Activated naive CD4-positive, alpha-beta T cell treated with anti-CD3 and anti-CD28 coated beads for 36 hours (primary cell): ENCODE measurements at regions of chr15 and their contacts with region 1.

Region 1: DNA sequence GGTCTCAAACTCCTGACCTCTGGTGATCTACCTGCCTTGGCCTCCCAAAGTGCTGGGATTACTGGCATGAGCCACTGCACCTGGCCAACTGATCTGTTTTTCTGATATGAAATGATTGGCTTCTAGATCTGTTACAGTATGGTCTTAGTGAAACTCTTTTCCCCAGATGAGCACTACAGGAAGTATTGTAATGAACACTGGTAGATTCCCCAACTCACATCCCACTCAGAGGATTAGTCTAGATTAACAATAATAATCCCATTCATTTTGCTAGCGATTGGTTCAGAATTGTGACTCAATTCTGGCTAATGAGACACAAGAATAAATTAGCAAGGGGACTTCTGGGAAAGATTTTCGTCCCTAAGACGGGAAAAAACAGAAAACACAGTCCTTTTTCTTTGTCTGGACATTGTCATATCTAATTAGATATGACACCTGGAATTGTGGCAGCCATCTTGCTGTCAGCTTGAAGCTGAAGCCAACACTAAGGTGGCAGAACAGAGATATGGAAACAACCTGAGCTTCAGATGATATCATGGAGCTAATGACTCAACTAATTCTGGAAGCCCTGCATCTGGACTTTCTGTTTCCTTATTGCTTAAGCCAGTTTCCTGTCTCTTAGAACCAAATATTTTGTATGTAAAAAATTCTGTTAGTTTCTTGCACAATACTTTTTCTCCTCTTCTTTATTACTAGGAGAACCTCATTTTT is 17.4 kb upstream of the NPTN start:
- DNase-seq: peak; percentile 48
- H3K4me3 Mint-ChIP-seq: no peak overlapping the region
- H3K27ac Mint-ChIP-seq: peak overlapping the region; percentile 60
- H3K4me1 Mint-ChIP-seq: peaks cover 28% of the 10 kb centered on the region
- H3K27me3 Mint-ChIP-seq: peaks cover 15% of the 10 kb centered on the region

Region 2: GRCh38 chr15:73504885-73505284 is 145.7 kb before region 1 on chr15:
- CTCF ChIA-PET with region 1: no interaction called
- intact Hi-C with region 1: no loop called
- DNase-seq: no peak
- H3K4me3 Mint-ChIP-seq: no peak overlapping the region
- H3K27ac Mint-ChIP-seq: no peak overlapping the region
- H3K4me1 Mint-ChIP-seq: no peaks in the 10 kb centered on the region
- H3K27me3 Mint-ChIP-seq: no peaks in the 10 kb centered on the region

Region 3: GRCh38 chr15:73677146-73677607 is 26.6 kb after region 1 on chr15:
- CTCF ChIA-PET with region 1: interaction called, 7 read pairs
- intact Hi-C with region 1: loop called (anchors 2 kb)
- DNase-seq: peak; percentile 68
- H3K4me3 Mint-ChIP-seq: no peak overlapping the region
- H3K27ac Mint-ChIP-seq: no peak overlapping the region
- H3K4me1 Mint-ChIP-seq: peaks cover 6% of the 10 kb centered on the region
- H3K27me3 Mint-ChIP-seq: peaks cover 14% of the 10 kb centered on the region

Region 4: DNA sequence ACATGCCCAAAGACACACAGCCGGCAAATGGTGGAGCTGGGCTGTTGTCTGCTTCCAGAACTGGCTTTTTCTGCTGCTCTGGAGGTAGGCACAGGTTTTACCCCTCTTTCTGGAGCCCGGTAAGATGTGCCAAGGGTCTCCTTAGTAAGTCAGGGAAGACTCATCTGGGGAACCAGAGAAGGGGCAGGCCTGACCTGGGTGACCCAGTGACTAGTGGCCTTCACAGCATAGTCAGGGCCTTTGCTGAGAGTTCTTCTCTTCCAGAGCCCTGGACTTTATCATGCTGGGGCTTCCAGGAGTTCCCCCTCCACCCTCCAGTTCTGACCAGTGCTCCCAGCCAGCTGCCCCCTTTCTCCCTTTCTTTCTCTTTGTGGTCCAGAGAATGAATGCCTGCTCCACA is 36.8 kb after region 1 on chr15:
- CTCF ChIA-PET with region 1: no interaction called
- intact Hi-C with region 1: no loop called
- DNase-seq: no peak
- H3K4me3 Mint-ChIP-seq: no peak overlapping the region
- H3K27ac Mint-ChIP-seq: no peak overlapping the region
- H3K4me1 Mint-ChIP-seq: peaks cover 12% of the 10 kb centered on the region
- H3K27me3 Mint-ChIP-seq: peaks cover 38% of the 10 kb centered on the region